Heart left ventricle (tissue), 16 donors: ENCODE measurements at regions of chr3 and their contacts with region 1.

Region 1: DNA sequence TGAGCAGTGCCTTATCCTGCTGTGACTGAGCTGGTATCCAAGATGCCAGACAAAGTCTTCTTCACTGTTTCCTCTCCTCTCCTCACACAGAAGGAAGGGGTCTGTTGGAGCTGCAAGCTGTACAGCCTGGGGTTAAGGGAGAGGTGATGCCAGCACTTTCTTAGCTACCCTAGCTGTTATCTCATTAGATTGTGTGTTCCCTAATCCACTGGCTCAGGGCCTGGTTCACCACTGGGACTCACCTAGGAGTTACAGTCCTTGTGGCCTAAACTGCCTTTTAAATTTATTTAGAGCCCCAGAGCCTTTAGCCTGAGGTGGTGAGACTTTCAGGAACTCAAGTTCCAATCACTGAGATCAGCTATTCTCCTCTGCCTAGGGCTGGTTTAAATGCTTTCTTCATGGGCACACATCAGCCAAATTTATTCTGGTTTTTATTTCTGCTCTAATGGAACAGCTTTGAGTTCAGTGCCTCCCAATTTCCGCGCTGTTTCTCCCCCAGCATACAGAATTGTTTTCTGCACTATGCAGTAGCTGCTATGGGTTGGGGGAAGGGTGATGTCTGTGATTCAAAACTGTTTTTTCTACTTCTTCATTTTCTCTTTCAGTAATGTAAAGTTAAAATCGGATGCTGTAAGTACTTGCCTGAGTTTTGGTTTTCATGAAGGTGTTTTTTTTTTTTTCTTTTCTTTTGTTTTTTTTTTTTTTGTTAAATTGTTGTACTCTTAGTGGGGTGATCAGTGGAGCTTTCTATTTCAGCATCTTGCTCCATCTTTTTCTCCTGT is 198.8 kb downstream of the DOCK3 start:
- DNase-seq: no peak
- ATAC-seq: peak in 3 of 4 donors; percentile 51 to 58 (median 53)
- H3K4me3 ChIP-seq: no peak overlapping the region
- H3K27ac ChIP-seq: no peak overlapping the region
- H3K4me1 ChIP-seq: peaks cover 0 to 8% (median 0%) of the 10 kb centered on the region in 12 donors
- H3K27me3 ChIP-seq: no peaks in the 10 kb centered on the region
- CTCF ChIP-seq: no peak
- POLR2A ChIP-seq: no peak

Region 2: GRCh38 chr3:50652709-50653108 is 220.9 kb before region 1 on chr3:
- intact Hi-C with region 1: no loop called
- DNase-seq: peak in 3 of 5 donors; percentile 41 to 59 (median 56)
- ATAC-seq: peak in 3 of 4 donors; percentile 9 to 40 (median 14)
- H3K4me3 ChIP-seq: no peak overlapping the region
- H3K27ac ChIP-seq: peak overlapping the region in 6 of 12 donors; percentile 0 to 97 (median 84)
- H3K4me1 ChIP-seq: peaks cover 0 to 48% (median 19%) of the 10 kb centered on the region in 12 donors
- H3K27me3 ChIP-seq: no peaks in the 10 kb centered on the region
- CTCF ChIP-seq: peak in 11 of 12 donors; percentile 34 to 60 (median 44)
- POLR2A ChIP-seq: no peak

Region 3: GRCh38 chr3:50674349-50675178 is 199.0 kb before region 1 on chr3 and contains the start of gene DOCK3:
- intact Hi-C with region 1: loop called in 2 of 10 experiments (anchors 10 kb)
- DNase-seq: peak; percentile 41 to 81 (median 62)
- ATAC-seq: peak; percentile 66 to 94 (median 88)
- H3K4me3 ChIP-seq: peak within 1 kb of the TSS; percentile 14 to 82 (median 55)
- H3K27ac ChIP-seq: peak within 1 kb of the TSS in 2 of 12 donors; percentile 42 to 60
- H3K4me1 ChIP-seq: peaks cover 0 to 12% (median 1%) of the 10 kb centered on the region in 12 donors
- H3K27me3 ChIP-seq: peaks cover 2 to 61% (median 34%) of the 10 kb centered on the region in 9 donors
- CTCF ChIP-seq: no peak
- POLR2A ChIP-seq: no peak
- total RNA-seq, gene DOCK3: 2.9 to 6.7 (median 4.8) TPM

Region 4: DNA sequence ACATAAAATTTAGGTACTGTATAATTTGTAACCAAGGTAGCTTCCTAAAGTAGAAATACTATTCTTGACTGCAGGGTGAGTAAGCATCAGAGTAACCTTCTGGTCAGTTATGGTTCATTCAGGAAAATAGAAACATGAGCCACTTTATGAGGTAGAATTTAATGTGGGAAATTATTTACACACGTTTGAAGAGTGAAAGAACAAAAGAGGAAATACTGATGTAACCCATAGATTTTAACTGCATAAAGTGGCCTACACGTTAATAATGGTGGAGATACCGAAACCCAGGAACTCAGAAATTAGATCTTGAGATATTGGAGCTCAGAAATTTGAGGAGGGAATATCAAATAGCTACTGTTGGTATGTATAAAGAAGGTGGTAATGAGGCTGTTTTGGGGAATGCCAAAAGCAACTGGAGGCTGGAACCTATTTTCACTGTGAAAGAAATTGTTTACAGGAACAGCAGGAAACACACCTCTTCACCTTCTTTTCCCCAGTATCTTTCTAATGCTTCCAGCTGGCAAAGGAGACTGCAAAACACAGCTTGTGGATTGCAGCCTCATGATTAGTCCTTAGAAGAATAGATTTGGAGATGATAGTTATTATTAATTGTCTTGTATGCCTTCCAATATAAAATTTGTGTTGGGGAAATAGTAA is 17.2 kb after region 1 on chr3:
- intact Hi-C with region 1: no loop called
- DNase-seq: no peak
- ATAC-seq: no peak
- H3K4me3 ChIP-seq: no peak overlapping the region
- H3K27ac ChIP-seq: no peak overlapping the region
- H3K4me1 ChIP-seq: no peaks in the 10 kb centered on the region
- H3K27me3 ChIP-seq: no peaks in the 10 kb centered on the region
- CTCF ChIP-seq: no peak
- POLR2A ChIP-seq: no peak

Region 5: DNA sequence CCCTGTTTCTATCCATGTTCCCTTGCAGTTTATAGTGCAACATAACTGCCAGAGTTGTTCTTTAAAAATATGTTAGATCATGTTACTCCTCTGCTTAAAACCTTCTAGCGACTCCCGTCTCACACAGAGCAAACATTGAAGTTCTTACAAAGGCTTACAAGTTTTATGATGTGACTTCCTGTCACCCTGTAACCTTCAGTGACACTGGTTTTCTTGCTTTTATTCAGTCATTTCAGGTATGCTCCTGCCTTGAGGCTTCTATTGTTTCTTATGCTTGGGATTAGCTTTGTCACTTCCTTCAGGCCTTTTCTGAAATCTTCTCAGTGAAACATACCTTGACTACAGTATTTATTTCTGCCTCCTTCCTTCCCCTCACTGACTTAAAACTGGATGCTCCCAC is 53.3 kb after region 1 on chr3:
- intact Hi-C with region 1: no loop called
- DNase-seq: no peak
- ATAC-seq: no peak
- H3K4me3 ChIP-seq: no peak overlapping the region
- H3K27ac ChIP-seq: no peak overlapping the region
- H3K4me1 ChIP-seq: no peaks in the 10 kb centered on the region
- H3K27me3 ChIP-seq: no peaks in the 10 kb centered on the region
- CTCF ChIP-seq: no peak
- POLR2A ChIP-seq: no peak

Region 6: DNA sequence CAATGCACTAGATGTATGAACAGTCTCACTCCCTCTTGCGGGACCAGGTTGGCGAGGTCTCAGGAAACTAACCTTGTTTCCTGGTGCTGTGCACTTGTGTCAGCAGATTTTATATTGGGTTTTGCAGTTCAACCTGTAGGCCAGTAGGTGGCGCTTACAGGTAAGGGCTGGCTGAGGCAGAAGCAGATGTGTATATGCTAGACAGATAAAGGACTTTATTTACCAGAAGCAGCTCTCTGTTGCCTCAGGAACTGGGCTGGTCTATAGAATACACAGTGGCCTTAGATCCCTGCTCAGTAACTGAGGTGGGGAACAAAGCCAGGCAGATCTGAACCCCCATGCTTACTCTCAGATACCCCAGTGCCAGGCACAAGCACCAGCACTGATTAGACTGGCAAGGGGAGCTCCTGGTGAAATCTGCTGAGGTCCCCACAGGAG is 97.9 kb after region 1 on chr3:
- intact Hi-C with region 1: no loop called
- DNase-seq: no peak
- ATAC-seq: peak in 3 of 4 donors; percentile 48 to 54 (median 48)
- H3K4me3 ChIP-seq: no peak overlapping the region
- H3K27ac ChIP-seq: no peak overlapping the region
- H3K4me1 ChIP-seq: no peaks in the 10 kb centered on the region
- H3K27me3 ChIP-seq: no peaks in the 10 kb centered on the region
- CTCF ChIP-seq: peak; percentile 51 to 74 (median 64)
- POLR2A ChIP-seq: no peak